Aorta (tissue), 5 donors: ENCODE measurements at regions of chr10 and their contacts with region 1.

Region 1: GRCh38 chr10:7301006-7301793 is 109.6 kb downstream of the SFMBT2 start:
- DNase-seq: no peak
- ATAC-seq: no peak
- H3K4me3 ChIP-seq: no peak overlapping the region
- H3K27ac ChIP-seq: no peak overlapping the region
- H3K4me1 ChIP-seq: no peaks in the 10 kb centered on the region
- H3K27me3 ChIP-seq: peaks cover 0 to 2% of the 10 kb centered on the region in 2 donors

Region 2: GRCh38 chr10:7239312-7239985 is 61.8 kb before region 1 on chr10:
- intact Hi-C with region 1: loop called in 1 of 2 experiments (anchors 10 kb)
- DNase-seq: no peak
- ATAC-seq: no peak
- H3K4me3 ChIP-seq: no peak overlapping the region
- H3K27ac ChIP-seq: no peak overlapping the region
- H3K4me1 ChIP-seq: no peaks in the 10 kb centered on the region
- H3K27me3 ChIP-seq: no peaks in the 10 kb centered on the region

Region 3: GRCh38 chr10:7378602-7379403 is 77.6 kb after region 1 on chr10:
- intact Hi-C with region 1: no loop called
- DNase-seq: no peak
- ATAC-seq: no peak
- H3K4me3 ChIP-seq: no peak overlapping the region
- H3K27ac ChIP-seq: no peak overlapping the region
- H3K4me1 ChIP-seq: no peaks in the 10 kb centered on the region
- H3K27me3 ChIP-seq: no peaks in the 10 kb centered on the region